ENCODE measurements at regions of chr11 and their contacts with region 1.

Region 1: DNA sequence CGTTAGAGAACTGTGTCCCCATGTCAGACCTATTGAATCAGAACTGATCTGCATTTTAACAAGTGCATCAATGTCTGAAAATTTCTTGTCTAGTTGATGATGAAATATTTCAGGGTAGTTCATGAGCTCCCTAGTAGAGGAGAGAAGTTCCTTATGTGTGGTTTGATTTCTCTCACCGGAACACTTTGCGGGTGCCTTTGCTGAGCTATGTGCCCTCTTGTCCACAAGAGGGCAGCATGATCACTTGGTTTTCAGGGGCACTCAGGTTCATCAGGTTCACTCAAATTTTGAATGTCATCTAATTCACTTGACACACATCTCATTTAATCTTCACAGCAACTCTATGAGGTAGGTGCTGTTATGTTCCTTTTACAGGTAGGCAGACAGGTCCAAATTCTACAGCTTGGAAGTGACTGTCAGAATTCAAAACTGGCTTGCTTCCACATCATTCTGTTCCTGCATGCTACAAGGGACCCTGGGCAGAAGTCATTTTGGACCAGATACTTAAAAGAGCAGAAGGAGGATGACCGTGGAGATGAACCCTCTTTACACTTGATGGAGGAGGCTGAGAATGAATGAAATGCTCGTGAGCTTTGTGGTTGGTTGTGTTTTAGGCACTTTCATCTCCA is 55.6 kb downstream of the P4HA3 start:
- DNase-seq: peak; percentile 73 to 74
- ATAC-seq: peak; percentile 60 to 66; a peak in 4 of 6 replicates
- H3K4me3 ChIP-seq: no peak overlapping the region
- H3K27ac ChIP-seq: peak overlapping the region; percentile 69 to 83
- H3K4me1 ChIP-seq: peaks cover 53% of the 10 kb centered on the region
- CTCF ChIP-seq: peak; percentile 96
- EP300 ChIP-seq: no peak
- POLR2A ChIP-seq: no peak
- RAD21 ChIP-seq: peak; percentile 97

Region 2: DNA sequence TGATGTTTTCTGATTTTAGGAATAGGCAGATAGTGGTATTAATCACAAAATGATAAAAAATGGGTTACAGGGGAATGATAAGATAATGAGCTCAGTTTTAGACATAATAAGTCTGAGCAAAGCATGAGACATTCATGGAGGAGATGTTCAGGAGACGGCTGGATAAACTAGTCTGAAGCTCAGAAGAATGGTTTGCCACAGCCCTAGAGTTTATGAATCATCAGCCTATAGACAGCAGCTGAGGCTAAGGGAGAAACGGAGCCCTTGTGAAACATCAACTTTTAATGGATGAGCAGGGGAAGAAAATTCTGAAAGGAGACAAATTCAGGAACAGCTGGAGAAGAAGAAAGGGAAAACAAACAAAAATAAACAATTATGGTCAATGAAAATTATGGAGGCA is 792.5 kb before region 1 on chr11:
- CTCF ChIA-PET with region 1: no interaction called
- POLR2A ChIA-PET with region 1: no interaction called
- DNase-seq: peak in 1 of 2 experiments; percentile 9
- ATAC-seq: 0 out of 6 replicates have a peak, but pooled peaks of 1 of the 2 experiments have one; percentile 40
- H3K4me3 ChIP-seq: no peak overlapping the region
- H3K27ac ChIP-seq: no peak overlapping the region
- H3K4me1 ChIP-seq: no peaks in the 10 kb centered on the region
- CTCF ChIP-seq: no peak
- EP300 ChIP-seq: no peak
- POLR2A ChIP-seq: no peak
- RAD21 ChIP-seq: no peak

Region 3: DNA sequence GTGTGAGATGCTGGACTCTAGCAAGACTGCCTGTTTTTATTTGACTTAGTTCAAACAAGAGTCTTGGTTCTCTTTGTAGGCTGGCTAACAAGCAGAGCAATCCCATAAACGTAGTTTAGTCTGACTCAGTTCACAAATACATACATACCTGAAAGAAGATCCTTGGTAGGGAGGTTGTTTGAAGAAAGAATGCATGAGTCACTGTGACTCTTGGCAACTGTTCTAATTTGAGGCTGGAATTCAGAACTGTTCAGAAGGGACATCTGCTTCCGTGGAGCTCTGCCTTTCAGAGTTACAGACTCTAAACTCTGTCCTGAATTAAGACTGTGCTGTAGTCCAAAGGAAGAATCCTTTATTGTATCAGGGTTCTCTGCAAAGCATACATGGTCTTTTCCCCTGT is 117.3 kb before region 1 on chr11:
- CTCF ChIA-PET with region 1: no interaction called
- POLR2A ChIA-PET with region 1: no interaction called
- DNase-seq: peak; percentile 74 to 97
- ATAC-seq: peak; percentile 95 to 96
- H3K4me3 ChIP-seq: no peak overlapping the region
- H3K27ac ChIP-seq: peak overlapping the region; percentile 88 to 90
- H3K4me1 ChIP-seq: peaks cover 91% of the 10 kb centered on the region
- CTCF ChIP-seq: no peak
- EP300 ChIP-seq: peak; percentile 61 to 88; a peak in 2 of 5 replicates
- POLR2A ChIP-seq: no peak
- RAD21 ChIP-seq: peak; percentile 37 to 42; a peak in 3 of 5 replicates

Region 4: DNA sequence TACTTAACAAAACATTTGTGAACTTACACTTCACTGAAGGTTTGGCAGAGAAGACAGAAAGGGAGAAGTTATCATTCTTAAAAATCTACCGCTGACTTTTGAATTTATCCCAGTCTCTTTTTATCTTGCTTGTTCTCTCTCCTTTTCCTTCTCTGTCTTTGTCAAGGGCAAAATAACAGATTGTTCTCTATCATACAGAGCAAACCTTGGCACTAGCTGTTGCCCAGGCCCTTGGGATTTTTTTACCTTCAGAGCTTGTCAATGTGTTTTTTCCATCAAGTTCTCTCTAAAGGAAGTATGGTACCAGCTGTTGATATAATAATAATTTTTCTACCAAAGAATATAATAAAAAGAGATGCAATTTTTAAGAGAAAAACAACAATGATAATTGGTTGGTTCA is 17.6 kb before region 1 on chr11:
- CTCF ChIA-PET with region 1: interaction called, 12 read pairs
- POLR2A ChIA-PET with region 1: no interaction called
- DNase-seq: no peak
- ATAC-seq: no peak
- H3K4me3 ChIP-seq: no peak overlapping the region
- H3K27ac ChIP-seq: no peak overlapping the region
- H3K4me1 ChIP-seq: no peaks in the 10 kb centered on the region
- CTCF ChIP-seq: no peak
- EP300 ChIP-seq: no peak
- POLR2A ChIP-seq: no peak
- RAD21 ChIP-seq: no peak

Region 5: GRCh38 chr11:74278721-74279161 is 22.9 kb after region 1 on chr11:
- CTCF ChIA-PET with region 1: interaction called, 32 read pairs
- POLR2A ChIA-PET with region 1: interaction called, 6 read pairs
- DNase-seq: peak; percentile 68 to 97
- ATAC-seq: peak; percentile 92 to 93
- H3K4me3 ChIP-seq: no peak overlapping the region; the same call in 2 of the 3 replicates
- H3K27ac ChIP-seq: peak overlapping the region; percentile 94 to 98
- H3K4me1 ChIP-seq: peaks cover 64% of the 10 kb centered on the region
- CTCF ChIP-seq: no peak
- EP300 ChIP-seq: peak; percentile 96
- POLR2A ChIP-seq: no peak
- RAD21 ChIP-seq: peak; percentile 1 to 50; a peak in 3 of 5 replicates

Region 6: DNA sequence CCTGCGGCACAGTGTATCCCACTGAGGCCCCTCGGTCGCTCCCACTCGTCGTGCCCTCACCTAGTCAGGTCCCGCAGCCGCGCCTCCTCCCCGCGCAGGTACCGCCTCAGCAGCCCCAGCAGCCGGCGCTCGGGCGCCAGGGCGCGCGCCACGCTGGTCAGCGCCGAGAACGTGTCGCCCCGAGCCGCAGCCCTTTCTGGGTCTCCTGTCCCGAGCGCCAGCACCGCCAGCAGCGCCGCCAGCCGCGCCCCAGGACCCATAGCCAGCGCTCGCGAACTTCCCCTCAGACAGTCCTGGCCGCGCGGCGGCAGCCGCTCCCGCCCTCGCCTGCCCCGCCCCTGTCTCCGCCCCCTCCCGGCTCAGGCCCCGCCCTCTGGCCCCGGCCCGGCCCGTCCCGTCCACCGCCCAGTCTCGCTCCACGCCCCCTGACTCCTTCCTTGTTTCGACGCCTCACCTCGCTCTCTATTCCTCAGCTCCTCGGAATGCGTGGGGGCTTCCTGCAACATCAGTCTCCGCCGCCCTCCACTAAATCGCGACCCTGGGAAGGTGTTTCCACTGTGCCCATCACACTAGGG is 55.6 kb after region 1 on chr11 and contains the start of gene P4HA3:
- CTCF ChIA-PET with region 1: interaction called, 11 read pairs
- POLR2A ChIA-PET with region 1: no interaction called
- DNase-seq: peak; percentile 64 to 77
- ATAC-seq: peak; percentile 91 to 97
- H3K4me3 ChIP-seq: peak within 1 kb of the TSS; percentile 77
- H3K27ac ChIP-seq: peak within 1 kb of the TSS; percentile 91 to 94
- H3K4me1 ChIP-seq: peaks cover 50% of the 10 kb centered on the region
- CTCF ChIP-seq: peak; percentile 29
- EP300 ChIP-seq: no peak
- POLR2A ChIP-seq: peak; percentile 31
- RAD21 ChIP-seq: peak in 1 of 2 experiments; percentile 58; a peak in 3 of 5 replicates
- polyA plus RNA-seq, gene P4HA3: 50.4 and 58.5 TPM in 2 replicates

Region 7: GRCh38 chr11:74332291-74332690 is 76.4 kb after region 1 on chr11:
- CTCF ChIA-PET with region 1: interaction called, 20 read pairs
- POLR2A ChIA-PET with region 1: no interaction called
- DNase-seq: no peak
- ATAC-seq: no peak
- H3K4me3 ChIP-seq: no peak overlapping the region
- H3K27ac ChIP-seq: no peak overlapping the region
- H3K4me1 ChIP-seq: peaks cover 18% of the 10 kb centered on the region
- CTCF ChIP-seq: no peak
- EP300 ChIP-seq: no peak
- POLR2A ChIP-seq: no peak
- RAD21 ChIP-seq: no peak

Region 8: GRCh38 chr11:74570266-74571061 is 314.6 kb after region 1 on chr11:
- CTCF ChIA-PET with region 1: interaction called, 36 read pairs
- POLR2A ChIA-PET with region 1: no interaction called
- DNase-seq: peak; percentile 70 to 83
- ATAC-seq: peak; percentile 93 to 97
- H3K4me3 ChIP-seq: no peak overlapping the region
- H3K27ac ChIP-seq: no peak overlapping the region
- H3K4me1 ChIP-seq: peaks cover 12% of the 10 kb centered on the region; the same call in 1 of the 3 replicates
- CTCF ChIP-seq: peak; percentile 91
- EP300 ChIP-seq: no peak
- POLR2A ChIP-seq: no peak
- RAD21 ChIP-seq: peak; percentile 91 to 95